Activated CD4-positive, alpha-beta memory T cell treated with anti-CD3 and anti-CD28 coated beads, Interleukin-2, amount 10 ng/mL, durations not matched to agents 7 days and 5 days (primary cell): ENCODE measurements at regions of chr6 and their contacts with region 1.

Region 1: DNA sequence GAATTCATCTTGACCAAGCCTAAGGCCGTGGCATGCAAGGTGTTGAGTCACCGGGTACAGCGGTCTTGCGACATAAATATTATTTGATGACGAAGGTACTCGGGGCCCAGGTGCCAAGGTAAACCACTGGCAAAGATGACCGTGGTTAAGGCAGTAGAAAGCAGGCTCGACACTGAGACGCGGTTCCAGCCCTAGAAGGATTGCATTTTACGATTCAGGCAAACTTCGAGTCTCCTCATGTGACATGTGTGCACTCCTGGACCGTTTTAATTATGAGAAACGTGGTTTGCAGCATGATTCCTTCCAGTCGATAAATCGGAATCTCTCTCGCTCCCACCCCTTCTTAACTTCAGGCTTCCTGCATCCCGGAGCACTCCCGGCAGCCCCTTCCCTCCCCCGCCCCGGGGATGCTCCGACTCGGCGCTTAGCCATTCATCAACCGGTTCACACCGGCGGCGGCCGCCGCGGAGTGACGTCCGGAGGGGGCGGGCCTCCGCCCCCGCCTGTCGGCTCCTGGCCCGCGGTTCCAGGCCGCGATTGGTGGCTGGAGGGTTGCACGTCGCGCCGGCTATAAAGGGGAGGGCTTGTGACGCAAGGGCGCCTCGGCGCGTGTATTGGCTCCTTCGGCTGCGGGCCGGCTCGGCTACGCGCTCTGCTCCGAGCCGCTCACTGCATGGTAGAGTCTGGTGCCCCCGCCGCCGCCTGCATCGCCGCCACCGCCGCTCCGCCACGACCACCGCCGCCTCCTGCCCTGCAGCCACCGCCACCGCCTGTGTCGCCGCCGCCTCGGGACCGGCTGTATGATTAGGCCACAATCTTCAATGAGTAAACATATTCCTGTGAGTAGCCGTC is at the starts of genes LOC128125822 and PTP4A1:
- DNase-seq: peak; percentile 97
- H3K4me3 Mint-ChIP-seq: peak within 1 kb of the TSS; percentile 95
- H3K27ac Mint-ChIP-seq: peak within 1 kb of the TSS; percentile 96
- H3K4me1 Mint-ChIP-seq: peaks cover 40% of the 10 kb centered on the region
- H3K27me3 Mint-ChIP-seq: no peaks in the 10 kb centered on the region
- total RNA-seq, gene PTP4A1: 62.7 to 63.7 TPM

Region 2: GRCh38 chr6:63352587-63353285 is 219.4 kb before region 1 on chr6:
- CTCF ChIA-PET with region 1: interaction called, 20 read pairs
- POLR2A ChIA-PET with region 1: interaction called, 12 read pairs
- DNase-seq: peak; percentile 18
- H3K4me3 Mint-ChIP-seq: peak overlapping the region; percentile 44
- H3K27ac Mint-ChIP-seq: peak overlapping the region; percentile 45
- H3K4me1 Mint-ChIP-seq: peaks cover 17% of the 10 kb centered on the region
- H3K27me3 Mint-ChIP-seq: peaks cover 13% of the 10 kb centered on the region

Region 3: GRCh38 chr6:63529498-63529897 is 42.6 kb before region 1 on chr6:
- CTCF ChIA-PET with region 1: interaction called, 4 read pairs
- POLR2A ChIA-PET with region 1: interaction called, 17 read pairs
- DNase-seq: no peak
- H3K4me3 Mint-ChIP-seq: peak overlapping the region; percentile 62
- H3K27ac Mint-ChIP-seq: peak overlapping the region; percentile 97
- H3K4me1 Mint-ChIP-seq: peaks cover 45% of the 10 kb centered on the region
- H3K27me3 Mint-ChIP-seq: no peaks in the 10 kb centered on the region

Region 4: DNA sequence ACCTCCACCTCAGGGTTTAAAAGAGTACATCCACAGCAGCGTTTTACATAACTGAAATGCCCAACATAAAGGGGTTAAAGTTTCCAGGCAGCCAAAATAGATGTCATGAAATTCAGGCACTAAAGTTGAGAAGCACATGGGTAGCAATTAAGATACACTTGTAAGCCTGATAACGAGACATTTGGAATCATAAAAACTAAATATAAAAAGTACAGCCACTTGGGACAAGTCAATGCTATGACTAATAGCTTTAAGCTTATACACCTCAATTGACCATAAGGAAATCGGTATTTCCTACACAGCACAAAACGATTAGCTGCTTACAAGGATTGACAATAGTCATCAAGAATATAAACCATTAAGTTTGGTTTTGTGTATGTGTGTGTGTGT is 12.0 kb after region 1 on chr6:
- CTCF ChIA-PET with region 1: interaction called, 5 read pairs
- POLR2A ChIA-PET with region 1: interaction called, 20 read pairs
- DNase-seq: no peak
- H3K4me3 Mint-ChIP-seq: no peak overlapping the region
- H3K27ac Mint-ChIP-seq: no peak overlapping the region
- H3K4me1 Mint-ChIP-seq: peaks cover 9% of the 10 kb centered on the region
- H3K27me3 Mint-ChIP-seq: no peaks in the 10 kb centered on the region

Region 5: GRCh38 chr6:63598049-63599036 is 26.2 kb after region 1 on chr6:
- CTCF ChIA-PET with region 1: interaction called, 16 read pairs
- POLR2A ChIA-PET with region 1: interaction called, 6 read pairs
- DNase-seq: peak; percentile 77
- H3K4me3 Mint-ChIP-seq: peak overlapping the region; percentile 73
- H3K27ac Mint-ChIP-seq: no peak overlapping the region
- H3K4me1 Mint-ChIP-seq: peaks cover 21% of the 10 kb centered on the region
- H3K27me3 Mint-ChIP-seq: peaks cover 6% of the 10 kb centered on the region

Region 6: DNA sequence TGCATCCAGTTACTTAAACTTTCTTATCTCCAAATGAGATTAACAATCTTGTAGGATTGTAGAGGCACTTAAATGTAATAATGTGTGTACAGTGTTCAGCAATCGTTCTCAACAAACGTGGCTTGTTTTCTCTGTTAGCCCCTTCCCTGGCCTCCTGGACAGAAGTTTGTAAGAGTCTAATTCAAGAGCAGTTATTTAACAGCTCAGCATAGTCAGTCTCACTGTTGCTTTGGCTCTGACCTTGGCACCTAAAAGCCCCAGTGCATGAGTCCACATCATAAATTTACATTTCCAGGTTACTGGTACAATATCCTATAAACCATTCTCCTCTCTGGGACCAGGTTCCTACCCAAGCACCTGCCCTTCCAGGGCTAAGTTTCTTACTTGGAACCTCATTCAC is 52.0 kb after region 1 on chr6:
- CTCF ChIA-PET with region 1: no interaction called
- POLR2A ChIA-PET with region 1: no interaction called
- DNase-seq: no peak
- H3K4me3 Mint-ChIP-seq: no peak overlapping the region
- H3K27ac Mint-ChIP-seq: no peak overlapping the region
- H3K4me1 Mint-ChIP-seq: no peaks in the 10 kb centered on the region
- H3K27me3 Mint-ChIP-seq: peaks cover 9% of the 10 kb centered on the region

Region 7: GRCh38 chr6:63635588-63636517 is 63.7 kb after region 1 on chr6 and contains the start of gene PHF3:
- CTCF ChIA-PET with region 1: interaction called, 22 read pairs
- POLR2A ChIA-PET with region 1: interaction called, 44 read pairs
- DNase-seq: peak; percentile 91
- H3K4me3 Mint-ChIP-seq: peak within 1 kb of the TSS; percentile 99
- H3K27ac Mint-ChIP-seq: peak within 1 kb of the TSS; percentile 97
- H3K4me1 Mint-ChIP-seq: peaks cover 43% of the 10 kb centered on the region
- H3K27me3 Mint-ChIP-seq: peaks cover 4% of the 10 kb centered on the region
- total RNA-seq, gene PHF3: 53.9 to 57.8 TPM